ENCODE measurements at regions of chr5 and their contacts with region 1.

Region 1: DNA sequence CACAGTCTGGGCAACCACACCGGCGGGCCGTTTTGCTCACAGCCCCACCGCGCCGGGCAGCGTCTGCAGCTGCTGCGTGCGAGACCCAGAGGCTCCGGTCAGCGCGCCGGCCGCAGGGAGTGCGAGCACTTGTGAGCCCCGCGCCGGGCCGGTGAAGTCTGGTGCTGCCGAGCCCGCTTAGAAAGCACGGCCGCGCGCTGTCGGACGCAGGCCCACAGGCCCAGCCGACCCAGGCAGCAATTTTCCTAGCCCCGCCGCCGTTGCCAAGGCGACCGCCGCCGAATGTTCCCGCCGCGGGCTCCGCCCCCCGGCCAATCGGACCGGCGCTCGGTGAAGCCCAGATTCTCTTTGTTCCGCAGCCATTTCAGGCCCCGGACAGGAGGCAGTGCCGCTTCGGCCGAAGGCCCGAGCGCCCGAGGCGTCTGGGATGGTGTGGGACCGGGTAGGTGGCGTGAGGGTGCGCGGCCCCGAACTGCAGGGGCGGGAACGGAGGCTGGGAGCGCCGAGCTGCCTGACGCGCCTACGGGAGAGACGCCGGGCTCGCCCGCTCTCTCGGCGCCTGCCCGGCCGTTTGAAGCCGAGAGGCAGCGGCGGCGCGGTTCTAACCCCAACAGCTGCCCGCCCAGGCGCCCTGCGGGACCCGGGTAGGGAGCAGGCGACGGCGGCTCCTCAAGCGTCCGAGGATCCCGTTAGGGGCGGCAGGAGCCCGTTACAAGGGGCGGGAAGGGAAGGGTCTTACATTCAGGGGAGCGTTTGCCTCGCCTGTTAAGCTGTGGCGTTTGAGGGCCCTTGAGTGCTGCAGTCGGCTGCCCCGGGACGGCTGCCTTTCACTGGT is at the start of gene TNPO1:
- DNase-seq: peak; percentile 75 to 92
- H3K4me3 ChIP-seq: peak within 1 kb of the TSS; percentile 81
- H3K27ac ChIP-seq: peak within 1 kb of the TSS; percentile 75
- H3K4me1 ChIP-seq: peaks cover 34% of the 10 kb centered on the region
- H3K27me3 ChIP-seq: no peaks in the 10 kb centered on the region
- CTCF ChIP-seq: no peak
- total RNA-seq, gene TNPO1: 135 and 185 TPM in 2 replicates

Region 2: DNA sequence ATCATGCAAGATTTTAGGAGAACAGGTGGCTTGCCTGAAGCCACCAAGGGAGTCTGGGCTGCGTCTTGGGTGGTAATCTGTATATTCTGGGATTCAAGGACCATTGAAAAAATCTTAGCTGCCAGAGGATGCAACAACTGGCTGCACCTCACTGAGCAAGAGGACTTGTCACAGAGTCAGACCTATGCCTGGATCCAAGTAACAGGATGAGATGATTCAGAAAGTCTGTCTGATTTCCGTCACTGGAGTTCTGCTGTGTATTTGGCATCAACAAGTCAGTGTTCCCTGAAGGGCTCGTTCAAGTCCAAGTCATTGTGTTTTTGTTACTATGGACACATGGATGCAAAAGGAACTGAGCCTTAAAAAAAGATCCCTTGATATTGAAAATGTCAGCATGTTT is 1135.2 kb before region 1 on chr5:
- CTCF ChIA-PET with region 1: no interaction called
- POLR2A ChIA-PET with region 1: no interaction called
- intact Hi-C with region 1: no loop called
- DNase-seq: no peak
- H3K4me3 ChIP-seq: no peak overlapping the region
- H3K27ac ChIP-seq: no peak overlapping the region
- H3K4me1 ChIP-seq: no peaks in the 10 kb centered on the region
- H3K27me3 ChIP-seq: no peaks in the 10 kb centered on the region; the same call in 1 of the 2 replicates
- CTCF ChIP-seq: no peak

Region 3: DNA sequence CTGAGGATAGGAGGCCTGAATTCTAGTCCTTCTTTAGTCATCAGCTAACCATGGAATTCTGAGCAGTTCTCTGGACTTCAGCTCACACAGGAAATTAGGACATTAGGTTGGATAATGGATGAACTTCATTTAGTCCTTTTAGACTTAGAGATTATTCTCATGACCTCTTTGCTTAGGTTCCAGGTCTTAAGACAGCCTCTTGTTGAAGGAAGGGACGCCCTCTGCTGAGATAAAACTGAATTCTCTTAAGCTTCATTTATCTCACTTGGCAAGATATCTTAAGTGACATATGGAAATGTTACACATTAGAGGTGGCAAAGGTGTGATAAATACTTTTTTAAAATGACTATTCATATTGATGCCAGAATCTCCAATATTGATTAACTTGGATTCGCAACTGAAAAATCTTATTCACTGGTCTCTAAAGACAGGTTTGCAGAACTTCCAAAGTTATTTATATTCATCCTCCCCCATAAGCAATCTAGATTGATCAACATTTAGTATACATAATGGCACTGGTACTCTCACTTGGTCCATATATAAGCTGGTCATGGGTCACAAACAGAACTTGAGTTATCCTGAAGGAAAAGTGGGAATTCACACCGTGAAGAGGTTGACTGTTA is 292.5 kb before region 1 on chr5:
- CTCF ChIA-PET with region 1: no interaction called
- POLR2A ChIA-PET with region 1: interaction called, 4 read pairs
- intact Hi-C with region 1: loop called (anchors 1 kb)
- DNase-seq: peak in 1 of 2 experiments; percentile 67
- H3K4me3 ChIP-seq: no peak overlapping the region
- H3K27ac ChIP-seq: no peak overlapping the region
- H3K4me1 ChIP-seq: peaks cover 13% of the 10 kb centered on the region
- H3K27me3 ChIP-seq: no peaks in the 10 kb centered on the region
- CTCF ChIP-seq: peak; percentile 76

Region 4: DNA sequence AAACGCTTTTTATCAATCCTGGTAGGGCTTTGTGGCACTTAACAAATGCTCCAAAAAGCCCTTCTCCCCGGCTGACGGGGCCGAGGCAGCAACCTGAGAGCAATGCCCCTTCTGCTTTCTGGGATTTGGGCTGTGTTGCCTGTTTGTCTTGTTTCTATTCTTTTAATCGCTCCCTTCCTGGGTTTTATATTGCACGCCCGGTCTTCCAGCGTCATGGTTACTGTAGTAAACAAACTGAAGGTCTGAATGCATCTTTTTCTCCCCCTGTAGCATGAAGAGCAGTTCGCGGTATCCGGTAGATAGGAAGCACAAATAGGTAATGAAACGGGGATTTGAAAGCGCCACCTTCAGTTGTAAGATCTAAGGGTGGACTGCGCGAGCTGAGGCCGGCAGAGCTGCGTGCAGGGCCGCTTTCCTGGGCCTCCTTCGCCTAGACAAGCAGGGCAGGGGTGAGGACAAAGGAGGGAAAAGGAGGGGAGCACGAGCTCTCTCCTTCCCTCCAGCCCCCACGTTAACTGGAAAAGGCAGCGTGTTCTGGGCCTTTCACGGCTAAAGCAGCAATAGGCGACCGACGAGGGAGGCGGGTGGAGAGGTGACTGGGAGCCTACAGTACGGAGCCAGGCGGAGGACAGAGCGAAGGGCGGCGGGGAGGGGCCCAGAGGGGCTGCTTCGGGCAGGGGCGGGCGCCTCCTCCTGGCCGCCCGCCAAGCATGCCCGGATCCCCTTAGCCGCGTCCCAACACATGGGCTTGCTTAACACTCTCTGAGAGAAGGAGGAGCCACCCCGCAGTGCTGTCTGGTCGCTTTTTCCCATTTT is 260.0 kb before region 1 on chr5:
- CTCF ChIA-PET with region 1: no interaction called
- POLR2A ChIA-PET with region 1: no interaction called
- intact Hi-C with region 1: loop called (anchors 10 kb)
- DNase-seq: peak in 1 of 2 experiments; percentile 53
- H3K4me3 ChIP-seq: no peak overlapping the region
- H3K27ac ChIP-seq: no peak overlapping the region
- H3K4me1 ChIP-seq: peaks cover 9% of the 10 kb centered on the region; the same call in 1 of the 2 replicates
- H3K27me3 ChIP-seq: no peaks in the 10 kb centered on the region
- CTCF ChIP-seq: no peak

Region 5: DNA sequence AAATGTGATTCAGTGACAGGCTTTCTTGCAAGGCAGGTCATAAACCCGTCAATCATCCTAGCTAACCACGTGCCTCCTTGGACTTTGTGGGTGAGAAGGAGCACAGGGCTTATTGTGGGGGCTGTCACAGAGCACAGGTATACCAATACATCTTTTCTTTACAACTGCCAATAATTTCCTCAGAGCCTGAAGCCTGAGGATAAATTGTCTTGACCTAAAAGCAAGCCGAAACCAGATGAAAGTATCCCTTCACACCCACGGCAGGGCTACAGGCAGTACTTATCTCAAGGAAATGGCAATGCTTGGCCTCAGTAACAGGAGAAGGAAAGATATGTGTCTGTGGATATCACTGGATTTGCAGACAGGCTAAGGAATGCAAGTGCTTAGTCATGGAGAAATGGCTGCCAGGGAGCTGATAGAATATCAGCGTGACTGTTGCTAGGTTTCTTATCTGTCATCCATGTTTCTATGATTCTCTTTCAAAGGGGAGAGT is 219.0 kb before region 1 on chr5:
- CTCF ChIA-PET with region 1: no interaction called
- POLR2A ChIA-PET with region 1: interaction called, 3 read pairs
- intact Hi-C with region 1: loop called (anchors 5 kb)
- DNase-seq: peak; percentile 41
- H3K4me3 ChIP-seq: no peak overlapping the region
- H3K27ac ChIP-seq: peak overlapping the region; percentile 96
- H3K4me1 ChIP-seq: peaks cover 47% of the 10 kb centered on the region
- H3K27me3 ChIP-seq: no peaks in the 10 kb centered on the region
- CTCF ChIP-seq: no peak

Region 6: DNA sequence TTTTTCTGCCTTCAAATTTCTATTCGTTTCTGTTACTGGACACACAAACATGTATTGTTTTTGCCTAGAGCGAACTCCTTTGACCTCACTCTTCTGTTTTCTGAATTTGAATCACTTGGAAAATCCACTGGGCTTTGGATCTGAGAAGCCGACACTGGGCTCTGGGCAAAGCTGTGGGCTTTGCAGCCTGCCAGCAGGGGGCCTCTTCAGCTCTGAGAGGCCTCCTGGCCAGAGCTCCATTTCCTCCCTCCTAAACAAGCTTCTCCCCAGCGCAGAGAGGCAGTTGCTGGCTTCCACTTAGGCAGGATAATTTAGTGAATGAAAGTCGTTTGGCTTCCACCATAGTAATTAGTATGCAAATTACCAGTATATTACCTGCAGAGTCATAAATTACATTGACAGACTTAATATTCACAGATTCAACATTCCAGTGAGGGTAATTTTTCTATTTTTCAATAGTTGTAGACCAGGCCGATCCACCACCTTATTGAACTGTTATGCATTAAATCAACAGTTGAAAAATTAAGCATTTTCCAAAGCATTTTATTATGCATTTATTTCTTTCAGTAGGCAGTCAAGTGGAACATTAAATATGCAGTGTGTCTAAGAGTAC is 205.3 kb before region 1 on chr5:
- CTCF ChIA-PET with region 1: interaction called, 18 read pairs
- POLR2A ChIA-PET with region 1: no interaction called
- intact Hi-C with region 1: loop called (anchors 1 kb)
- DNase-seq: peak in 1 of 2 experiments; percentile 56
- H3K4me3 ChIP-seq: no peak overlapping the region
- H3K27ac ChIP-seq: no peak overlapping the region
- H3K4me1 ChIP-seq: no peaks in the 10 kb centered on the region
- H3K27me3 ChIP-seq: no peaks in the 10 kb centered on the region
- CTCF ChIP-seq: peak; percentile 90

Region 7: DNA sequence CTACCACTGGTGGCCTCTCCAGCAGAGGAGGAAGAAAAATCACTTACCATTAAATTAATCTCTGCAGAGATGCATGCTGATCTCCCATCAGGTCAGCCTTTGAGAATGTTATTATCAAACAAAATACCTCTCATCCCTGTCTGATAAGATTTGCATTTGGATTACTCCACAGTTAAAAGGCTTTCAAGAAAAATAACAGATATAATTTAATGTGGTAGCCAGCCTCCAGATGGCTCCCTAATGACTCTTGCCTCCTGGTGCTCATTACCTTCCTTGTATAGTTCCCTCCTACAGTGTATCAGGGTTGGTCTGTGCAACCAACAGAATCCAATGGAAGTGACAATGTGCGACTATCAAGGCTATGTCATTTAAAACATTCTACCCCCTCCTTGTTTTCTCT is 63.6 kb before region 1 on chr5:
- CTCF ChIA-PET with region 1: no interaction called
- POLR2A ChIA-PET with region 1: no interaction called
- intact Hi-C with region 1: no loop called
- DNase-seq: no peak
- H3K4me3 ChIP-seq: no peak overlapping the region
- H3K27ac ChIP-seq: no peak overlapping the region
- H3K4me1 ChIP-seq: no peaks in the 10 kb centered on the region
- H3K27me3 ChIP-seq: no peaks in the 10 kb centered on the region
- CTCF ChIP-seq: no peak

Region 8: GRCh38 chr5:72847989-72848473 is 31.5 kb after region 1 on chr5:
- CTCF ChIA-PET with region 1: no interaction called
- POLR2A ChIA-PET with region 1: interaction called, 5 read pairs
- intact Hi-C with region 1: loop called (anchors 2 kb)
- DNase-seq: peak; percentile 77 to 85
- H3K4me3 ChIP-seq: peak overlapping the region; percentile 94
- H3K27ac ChIP-seq: peak overlapping the region; percentile 80
- H3K4me1 ChIP-seq: peaks cover 70% of the 10 kb centered on the region
- H3K27me3 ChIP-seq: no peaks in the 10 kb centered on the region
- CTCF ChIP-seq: peak; percentile 54; the same call in 1 of the 2 replicates

Region 9: GRCh38 chr5:74016373-74016772 is 1199.8 kb after region 1 on chr5:
- CTCF ChIA-PET with region 1: no interaction called
- POLR2A ChIA-PET with region 1: no interaction called
- intact Hi-C with region 1: no loop called
- DNase-seq: peak in 1 of 2 experiments; percentile 18
- H3K4me3 ChIP-seq: no peak overlapping the region
- H3K27ac ChIP-seq: peak overlapping the region; percentile 75
- H3K4me1 ChIP-seq: peaks cover 24% of the 10 kb centered on the region
- H3K27me3 ChIP-seq: no peaks in the 10 kb centered on the region
- CTCF ChIP-seq: 0 out of 2 replicates have a peak, but pooled peaks have one; percentile 40

Measured in PC-9 (cell line).